GM12878 (cell line): ENCODE measurements at regions of chr4 and their contacts with region 1.

Region 1: DNA sequence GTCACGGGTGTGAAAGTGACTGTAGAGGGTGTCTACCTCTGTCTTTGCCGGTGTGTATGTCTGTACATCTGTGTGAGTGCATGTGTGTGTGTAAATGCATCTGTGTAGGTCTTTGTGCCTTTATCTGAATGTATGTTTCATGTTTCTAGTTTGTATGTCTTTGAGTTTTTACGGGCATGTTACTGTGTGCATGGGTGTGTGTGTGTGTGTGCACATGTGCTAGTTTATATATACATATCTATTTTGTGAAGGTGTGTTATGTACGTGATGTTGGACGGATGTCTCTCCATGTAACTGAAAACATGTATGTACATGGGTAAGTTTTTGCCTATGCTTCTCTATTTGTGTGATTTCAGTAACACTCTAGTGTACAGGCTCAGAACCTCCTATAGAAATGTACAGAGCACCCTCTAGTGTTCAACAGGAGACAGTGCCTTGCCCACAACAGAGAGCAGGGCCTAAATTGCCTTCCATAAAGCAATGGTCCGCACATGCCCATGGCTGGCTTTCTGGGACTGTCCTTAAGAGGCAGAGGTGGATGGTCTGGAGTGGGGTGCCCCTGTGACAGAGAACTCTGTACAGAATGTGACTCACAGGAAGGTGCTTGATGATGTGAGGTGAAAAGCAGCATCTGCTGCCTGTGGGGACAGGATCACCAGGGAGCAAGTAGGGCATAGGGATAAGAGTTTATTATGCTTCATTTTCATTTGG is 343.5 kb downstream of the RAPGEF2 start:
- DNase-seq: peak; percentile 26
- ATAC-seq: peak; percentile 100
- H3K4me3 ChIP-seq: no peak overlapping the region
- H3K27ac ChIP-seq: no peak overlapping the region
- H3K4me1 ChIP-seq: no peaks in the 10 kb centered on the region
- H3K27me3 ChIP-seq: no peaks in the 10 kb centered on the region
- CTCF ChIP-seq: peak; percentile 76 to 90 (median 86)
- EP300 ChIP-seq: no peak
- POLR2A ChIP-seq: no peak
- RAD21 ChIP-seq: peak; percentile 95

Region 2: GRCh38 chr4:158259955-158260575 is 1186.4 kb before region 1 on chr4:
- CTCF ChIA-PET with region 1: interaction called, 3 read pairs
- POLR2A ChIA-PET with region 1: no interaction called
- RAD21 ChIA-PET with region 1: no interaction called
- SMC1A ChIA-PET with region 1: interaction called, 3 read pairs
- in situ Hi-C with region 1: loop called (anchors 10 kb)
- intact Hi-C with region 1: loop called (anchors 5 kb)
- DNase-seq: no peak
- ATAC-seq: peak; percentile 65
- H3K4me3 ChIP-seq: no peak overlapping the region
- H3K27ac ChIP-seq: no peak overlapping the region
- H3K4me1 ChIP-seq: no peaks in the 10 kb centered on the region
- H3K27me3 ChIP-seq: no peaks in the 10 kb centered on the region
- CTCF ChIP-seq: peak in 2 of 3 experiments; percentile 24 to 41; a peak in 2 of 6 replicates
- EP300 ChIP-seq: no peak
- POLR2A ChIP-seq: no peak
- RAD21 ChIP-seq: peak; percentile 36; the same call in 1 of the 2 replicates

Region 3: GRCh38 chr4:158459085-158459820 is 987.2 kb before region 1 on chr4:
- CTCF ChIA-PET with region 1: no interaction called
- POLR2A ChIA-PET with region 1: no interaction called
- RAD21 ChIA-PET with region 1: no interaction called
- SMC1A ChIA-PET with region 1: no interaction called
- in situ Hi-C with region 1: no loop called
- intact Hi-C with region 1: no loop called
- DNase-seq: no peak
- ATAC-seq: no peak
- H3K4me3 ChIP-seq: no peak overlapping the region
- H3K27ac ChIP-seq: no peak overlapping the region
- H3K4me1 ChIP-seq: no peaks in the 10 kb centered on the region
- H3K27me3 ChIP-seq: no peaks in the 10 kb centered on the region; a peak in 1 of 4 replicates
- CTCF ChIP-seq: no peak
- EP300 ChIP-seq: no peak
- POLR2A ChIP-seq: no peak
- RAD21 ChIP-seq: no peak

Region 4: GRCh38 chr4:158671915-158672806 is 774.3 kb before region 1 on chr4 and contains the start of gene ETFDH:
- CTCF ChIA-PET with region 1: no interaction called
- POLR2A ChIA-PET with region 1: no interaction called
- RAD21 ChIA-PET with region 1: no interaction called
- SMC1A ChIA-PET with region 1: no interaction called
- in situ Hi-C with region 1: no loop called
- intact Hi-C with region 1: loop called (anchors 2 kb)
- DNase-seq: peak; percentile 99
- ATAC-seq: peak; percentile 88
- H3K4me3 ChIP-seq: peak within 1 kb of the TSS; percentile 89
- H3K27ac ChIP-seq: peak within 1 kb of the TSS; percentile 85
- H3K4me1 ChIP-seq: no peaks in the 10 kb centered on the region
- H3K27me3 ChIP-seq: no peaks in the 10 kb centered on the region
- CTCF ChIP-seq: peak; percentile 63 to 82 (median 71)
- EP300 ChIP-seq: no peak
- POLR2A ChIP-seq: peak; percentile 89
- RAD21 ChIP-seq: no peak
- polyA plus RNA-seq, gene ETFDH: 10.9 to 17.9 TPM

Region 5: DNA sequence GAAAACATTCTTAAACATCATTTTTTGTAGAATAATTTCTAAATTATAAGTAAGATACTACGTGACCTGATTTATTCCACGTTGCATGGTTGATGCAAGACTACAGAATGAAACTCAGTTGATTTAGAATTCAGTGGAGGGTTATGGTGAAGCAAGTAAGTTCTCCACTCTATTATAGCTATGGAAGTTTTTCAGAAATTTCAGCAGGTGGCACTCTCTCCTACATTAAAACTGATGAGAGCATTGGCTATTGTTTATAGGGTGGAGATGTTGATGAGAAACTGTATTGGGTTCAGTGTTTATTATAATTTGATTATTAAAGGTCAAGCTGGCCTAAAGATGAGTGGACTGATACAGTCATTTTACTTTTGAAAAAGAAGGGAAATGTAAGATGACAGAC is 589.6 kb before region 1 on chr4:
- CTCF ChIA-PET with region 1: interaction called, 4 read pairs
- POLR2A ChIA-PET with region 1: no interaction called
- RAD21 ChIA-PET with region 1: interaction called, 6 read pairs
- SMC1A ChIA-PET with region 1: no interaction called
- in situ Hi-C with region 1: loop called (anchors 5 kb)
- intact Hi-C with region 1: loop called (anchors 1 kb)
- DNase-seq: no peak
- ATAC-seq: peak; percentile 78
- H3K4me3 ChIP-seq: no peak overlapping the region
- H3K27ac ChIP-seq: no peak overlapping the region
- H3K4me1 ChIP-seq: peaks cover 8% of the 10 kb centered on the region
- H3K27me3 ChIP-seq: no peaks in the 10 kb centered on the region
- CTCF ChIP-seq: peak; percentile 51 to 71 (median 52); a peak in 5 of 6 replicates
- EP300 ChIP-seq: no peak
- POLR2A ChIP-seq: no peak
- RAD21 ChIP-seq: peak; percentile 93

Region 6: GRCh38 chr4:159201168-159201567 is 245.3 kb before region 1 on chr4:
- CTCF ChIA-PET with region 1: no interaction called
- POLR2A ChIA-PET with region 1: no interaction called
- RAD21 ChIA-PET with region 1: no interaction called
- SMC1A ChIA-PET with region 1: no interaction called
- in situ Hi-C with region 1: loop called (anchors 10 kb)
- intact Hi-C with region 1: loop called (anchors 5 kb)
- DNase-seq: no peak
- ATAC-seq: no peak
- H3K4me3 ChIP-seq: no peak overlapping the region
- H3K27ac ChIP-seq: no peak overlapping the region
- H3K4me1 ChIP-seq: peaks cover 18% of the 10 kb centered on the region
- H3K27me3 ChIP-seq: no peaks in the 10 kb centered on the region
- CTCF ChIP-seq: no peak
- EP300 ChIP-seq: no peak
- POLR2A ChIP-seq: no peak
- RAD21 ChIP-seq: no peak

Region 7: GRCh38 chr4:159273141-159273438 is 173.3 kb before region 1 on chr4:
- CTCF ChIA-PET with region 1: no interaction called
- POLR2A ChIA-PET with region 1: no interaction called
- RAD21 ChIA-PET with region 1: no interaction called
- SMC1A ChIA-PET with region 1: no interaction called
- in situ Hi-C with region 1: no loop called
- intact Hi-C with region 1: no loop called
- DNase-seq: no peak
- ATAC-seq: no peak
- H3K4me3 ChIP-seq: no peak overlapping the region
- H3K27ac ChIP-seq: no peak overlapping the region
- H3K4me1 ChIP-seq: no peaks in the 10 kb centered on the region
- H3K27me3 ChIP-seq: no peaks in the 10 kb centered on the region
- CTCF ChIP-seq: no peak
- EP300 ChIP-seq: no peak
- POLR2A ChIP-seq: no peak
- RAD21 ChIP-seq: no peak

Region 8: GRCh38 chr4:159334461-159334860 is 112.0 kb before region 1 on chr4:
- CTCF ChIA-PET with region 1: no interaction called
- POLR2A ChIA-PET with region 1: no interaction called
- RAD21 ChIA-PET with region 1: no interaction called
- SMC1A ChIA-PET with region 1: no interaction called
- in situ Hi-C with region 1: no loop called
- intact Hi-C with region 1: no loop called
- DNase-seq: no peak
- ATAC-seq: no peak
- H3K4me3 ChIP-seq: no peak overlapping the region
- H3K27ac ChIP-seq: no peak overlapping the region
- H3K4me1 ChIP-seq: no peaks in the 10 kb centered on the region
- H3K27me3 ChIP-seq: no peaks in the 10 kb centered on the region
- CTCF ChIP-seq: no peak
- EP300 ChIP-seq: no peak
- POLR2A ChIP-seq: no peak
- RAD21 ChIP-seq: no peak